Left ventricle myocardium superior (tissue), 1 donor: ENCODE measurements at regions of chr6 and their contacts with region 1.

Region 1: GRCh38 chr6:39302669-39303424 is 11.4 kb downstream of the KCNK17 start:
- DNase-seq: peak; percentile 91
- ATAC-seq: peak; percentile 96

Region 2: DNA sequence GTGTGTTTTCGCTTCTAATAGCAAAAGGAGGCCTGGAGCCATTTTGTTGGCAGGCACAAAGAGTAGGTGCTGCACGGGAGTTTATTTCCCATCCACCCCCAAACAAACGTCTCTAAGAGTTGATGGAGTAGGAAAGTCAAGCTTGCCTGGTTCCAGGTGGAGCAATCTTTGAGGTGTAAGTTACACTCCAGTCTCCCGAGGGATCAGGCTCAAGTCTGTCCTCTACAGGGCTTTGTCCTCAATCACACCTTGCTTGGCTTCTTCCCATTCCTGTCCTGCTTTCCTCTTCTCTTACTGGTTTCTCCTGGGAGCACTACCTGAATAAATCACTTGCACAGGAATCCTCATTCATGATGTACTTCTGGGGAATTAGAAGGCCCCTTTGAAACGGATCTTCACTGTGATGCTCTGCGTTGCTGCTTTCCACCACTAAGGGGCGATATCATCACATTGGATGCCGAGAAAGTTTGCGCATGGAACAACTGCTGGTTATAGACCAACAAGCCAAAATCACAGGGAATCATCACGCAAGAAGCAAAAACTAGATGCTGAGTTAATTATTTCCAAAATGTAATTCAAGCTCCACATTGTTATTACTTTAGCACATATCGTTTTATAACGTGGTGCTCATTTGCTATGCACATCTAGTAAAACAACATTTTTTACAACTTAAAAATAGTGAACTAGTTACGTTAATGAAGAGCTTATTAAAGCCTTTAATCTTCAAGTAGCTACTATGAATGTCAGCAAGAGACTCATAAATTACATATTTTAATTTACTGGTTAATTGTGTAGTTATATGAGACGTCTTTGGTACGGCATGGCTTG is 430.9 kb before region 1 on chr6:
- intact Hi-C with region 1: loop called (anchors 10 kb)
- DNase-seq: no peak
- ATAC-seq: no peak

Region 3: DNA sequence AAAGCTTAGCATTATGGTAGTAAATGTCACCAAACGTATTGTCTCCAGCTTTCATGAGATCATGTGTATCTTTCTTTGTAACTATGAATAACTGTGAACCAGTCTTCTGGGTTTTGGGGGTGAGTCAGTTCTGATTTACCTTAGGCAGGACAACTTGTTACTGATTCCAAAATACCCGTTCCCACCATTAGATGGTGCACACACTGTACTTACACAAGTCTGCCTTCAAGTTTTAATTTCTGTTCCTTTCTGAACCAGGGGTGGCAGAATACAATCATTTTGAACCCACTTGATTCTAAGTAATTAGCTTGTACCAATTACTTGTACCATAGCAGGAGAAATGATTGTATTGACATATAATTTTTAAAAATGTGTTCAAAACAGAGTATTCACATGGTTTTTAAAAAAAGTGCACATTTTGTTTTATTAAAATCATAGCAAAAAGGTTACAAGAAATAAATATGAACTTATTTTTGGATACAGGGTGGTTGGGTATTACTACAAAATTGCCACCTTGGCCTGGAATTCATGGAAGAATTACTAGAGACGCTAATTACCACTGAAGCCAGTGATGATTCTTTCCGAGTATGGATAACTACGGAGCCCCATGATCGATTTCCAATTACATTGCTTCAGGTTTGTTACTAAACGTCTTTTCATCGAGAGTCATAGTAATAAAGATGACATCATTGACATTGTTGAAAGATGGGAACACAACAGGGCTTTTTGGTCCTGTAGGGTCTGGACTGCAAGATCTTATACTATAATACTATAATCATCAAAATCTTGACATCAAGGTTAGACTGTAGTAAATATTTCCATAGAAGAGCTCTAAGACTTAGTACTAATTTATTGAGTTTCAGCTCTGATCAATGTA is 329.4 kb before region 1 on chr6:
- intact Hi-C with region 1: loop called (anchors 10 kb)
- DNase-seq: no peak
- ATAC-seq: peak; percentile 72

Region 4: GRCh38 chr6:39128106-39128505 is 174.7 kb before region 1 on chr6:
- intact Hi-C with region 1: no loop called
- DNase-seq: no peak
- ATAC-seq: no peak